A549 (cell line): ENCODE measurements at regions of chr6 and their contacts with region 1.

Region 1: GRCh38 chr6:30742316-30743098 is at the start of gene FLOT1:
- DNase-seq: peak; percentile 64 to 94
- ATAC-seq: peak; percentile 74 to 78
- H3K4me3 ChIP-seq: peak within 1 kb of the TSS; percentile 99
- H3K27ac ChIP-seq: peak within 1 kb of the TSS; percentile 97 to 98
- H3K4me1 ChIP-seq: peaks cover 64% of the 10 kb centered on the region
- CTCF ChIP-seq: no peak
- EP300 ChIP-seq: peak; percentile 5 to 41; a peak in 2 of 5 replicates
- POLR2A ChIP-seq: peak; percentile 74
- RAD21 ChIP-seq: peak in 1 of 2 experiments; percentile 49; a peak in 3 of 5 replicates
- polyA plus RNA-seq, gene FLOT1: 135 and 136 TPM in 2 replicates

Region 2: GRCh38 chr6:30678964-30679726 is 63.4 kb before region 1 on chr6:
- CTCF ChIA-PET with region 1: interaction called, 29 read pairs
- POLR2A ChIA-PET with region 1: interaction called, 5 read pairs
- DNase-seq: peak; percentile 67 to 76
- ATAC-seq: peak; percentile 80 to 88; a peak in 5 of 6 replicates
- H3K4me3 ChIP-seq: 0 out of 3 replicates have a peak overlapping the region, but pooled peaks have one; percentile 19
- H3K27ac ChIP-seq: peak overlapping the region; percentile 59 to 87
- H3K4me1 ChIP-seq: peaks cover 37% of the 10 kb centered on the region
- CTCF ChIP-seq: peak; percentile 85
- EP300 ChIP-seq: no peak
- POLR2A ChIP-seq: no peak
- RAD21 ChIP-seq: peak; percentile 89 to 90

Region 3: GRCh38 chr6:30730601-30731435 is 11.7 kb before region 1 on chr6:
- CTCF ChIA-PET with region 1: interaction called, 37 read pairs
- POLR2A ChIA-PET with region 1: interaction called, 8 read pairs
- DNase-seq: peak in 1 of 2 experiments; percentile 74
- ATAC-seq: peak; percentile 63 to 65
- H3K4me3 ChIP-seq: no peak overlapping the region
- H3K27ac ChIP-seq: peak overlapping the region in 1 of 2 experiments; percentile 64; a peak in 3 of 6 replicates
- H3K4me1 ChIP-seq: peaks cover 28% of the 10 kb centered on the region; the same call in 2 of the 3 replicates
- CTCF ChIP-seq: peak; percentile 47; the same call in 2 of the 3 replicates
- EP300 ChIP-seq: no peak
- POLR2A ChIP-seq: no peak
- RAD21 ChIP-seq: peak; percentile 67 to 70

Region 4: GRCh38 chr6:30769088-30769852 is 26.8 kb after region 1 on chr6:
- CTCF ChIA-PET with region 1: interaction called, 6 read pairs
- POLR2A ChIA-PET with region 1: interaction called, 41 read pairs
- DNase-seq: peak; percentile 93 to 94
- ATAC-seq: peak; percentile 91 to 95
- H3K4me3 ChIP-seq: peak overlapping the region; percentile 3; the same call in 1 of the 3 replicates
- H3K27ac ChIP-seq: peak overlapping the region; percentile 89 to 97
- H3K4me1 ChIP-seq: peaks cover 70% of the 10 kb centered on the region
- CTCF ChIP-seq: no peak
- EP300 ChIP-seq: peak; percentile 68 to 81; a peak in 3 of 5 replicates
- POLR2A ChIP-seq: no peak
- RAD21 ChIP-seq: peak; percentile 13 to 34; a peak in 2 of 5 replicates

Region 5: DNA sequence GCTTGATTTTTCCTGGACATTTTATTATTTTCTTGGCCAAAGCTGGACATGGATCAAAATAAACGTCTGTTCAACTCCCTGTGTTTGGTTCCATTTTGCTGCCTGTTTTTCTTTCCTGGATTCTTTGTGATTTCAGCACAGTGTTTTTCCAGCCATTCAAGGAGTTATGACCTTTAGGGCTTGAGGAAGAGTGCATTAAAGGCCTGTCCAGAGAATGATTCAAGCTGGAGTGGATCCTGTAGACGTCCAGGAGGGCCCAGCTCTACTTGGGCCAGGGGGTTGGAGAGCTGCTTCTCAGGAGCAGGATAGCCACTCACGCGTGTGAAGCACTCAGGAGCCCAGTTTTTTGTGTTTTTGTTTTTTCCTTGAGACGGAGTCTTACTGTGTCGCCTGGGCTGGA is 58.4 kb after region 1 on chr6:
- CTCF ChIA-PET with region 1: no interaction called
- POLR2A ChIA-PET with region 1: no interaction called
- DNase-seq: no peak
- ATAC-seq: no peak
- H3K4me3 ChIP-seq: no peak overlapping the region
- H3K27ac ChIP-seq: peak overlapping the region in 1 of 2 experiments; percentile 59; a peak in 1 of 6 replicates
- H3K4me1 ChIP-seq: no peaks in the 10 kb centered on the region
- CTCF ChIP-seq: no peak
- EP300 ChIP-seq: no peak
- POLR2A ChIP-seq: no peak
- RAD21 ChIP-seq: no peak

Region 6: GRCh38 chr6:30821862-30822782 is 79.6 kb after region 1 on chr6:
- CTCF ChIA-PET with region 1: interaction called, 5 read pairs
- POLR2A ChIA-PET with region 1: interaction called, 21 read pairs
- DNase-seq: peak; percentile 44 to 48
- ATAC-seq: peak; percentile 46 to 61; a peak in 3 of 6 replicates
- H3K4me3 ChIP-seq: no peak overlapping the region
- H3K27ac ChIP-seq: peak overlapping the region; percentile 81 to 90
- H3K4me1 ChIP-seq: peaks cover 62% of the 10 kb centered on the region
- CTCF ChIP-seq: peak; percentile 54
- EP300 ChIP-seq: no peak
- POLR2A ChIP-seq: no peak
- RAD21 ChIP-seq: peak; percentile 35 to 43; a peak in 2 of 5 replicates

Region 7: GRCh38 chr6:31180502-31180901 is 438.0 kb after region 1 on chr6:
- CTCF ChIA-PET with region 1: no interaction called
- POLR2A ChIA-PET with region 1: no interaction called
- DNase-seq: no peak
- ATAC-seq: peak in 1 of 2 experiments; percentile 68; a peak in 3 of 6 replicates
- H3K4me3 ChIP-seq: no peak overlapping the region
- H3K27ac ChIP-seq: no peak overlapping the region
- H3K4me1 ChIP-seq: peaks cover 16% of the 10 kb centered on the region; the same call in 2 of the 3 replicates
- CTCF ChIP-seq: no peak
- EP300 ChIP-seq: no peak
- POLR2A ChIP-seq: no peak
- RAD21 ChIP-seq: no peak